Heart right ventricle (tissue), 16 donors: ENCODE measurements at regions of chr2 and their contacts with region 1.

Region 1: GRCh38 chr2:218269899-218270720 is at the starts of genes AAMP and PNKD:
- DNase-seq: peak; percentile 100
- ATAC-seq: peak; percentile 92 to 96 (median 95)
- H3K4me3 ChIP-seq: peak within 1 kb of the TSS; percentile 72 to 97 (median 90)
- H3K27ac ChIP-seq: peak within 1 kb of the TSS; percentile 62 to 93 (median 88)
- H3K4me1 ChIP-seq: peaks cover 17 to 64% (median 47%) of the 10 kb centered on the region in 9 donors
- H3K27me3 ChIP-seq: no peaks in the 10 kb centered on the region
- CTCF ChIP-seq: peak in 7 of 9 donors; percentile 4 to 54 (median 44)
- total RNA-seq, gene AAMP: 45.9 to 65.1 (median 57.5) TPM
- total RNA-seq, gene PNKD: 56.9 to 91.1 (median 74.2) TPM

Region 2: DNA sequence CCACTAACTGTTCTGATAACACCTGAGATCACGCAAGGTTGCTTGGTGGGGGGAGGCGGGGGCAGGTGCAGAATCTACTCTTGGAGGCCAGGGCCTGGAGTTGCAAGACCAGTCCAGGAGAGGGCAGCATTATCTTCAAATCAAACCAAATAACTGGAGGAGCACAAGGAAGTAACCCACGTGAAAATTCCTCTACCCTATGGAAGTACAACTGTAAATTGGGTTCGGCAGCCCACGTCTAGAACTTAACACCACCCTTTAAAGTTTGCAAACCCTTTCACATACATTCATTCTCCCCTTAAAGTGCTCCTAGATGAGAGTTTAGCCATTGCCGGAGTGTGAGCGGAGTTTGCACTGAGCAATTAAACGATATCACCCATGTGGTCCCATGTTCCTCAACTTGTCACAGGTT is 83.7 kb before region 1 on chr2:
- intact Hi-C with region 1: loop called in 2 of 10 experiments (anchors 5 kb)
- DNase-seq: peak; percentile 30 to 69
- ATAC-seq: peak; percentile 74 to 94 (median 90)
- H3K4me3 ChIP-seq: no peak overlapping the region
- H3K27ac ChIP-seq: no peak overlapping the region
- H3K4me1 ChIP-seq: peaks cover 0 to 10% (median 8%) of the 10 kb centered on the region in 9 donors
- H3K27me3 ChIP-seq: no peaks in the 10 kb centered on the region
- CTCF ChIP-seq: peak; percentile 56 to 90 (median 83)

Region 3: GRCh38 chr2:218206306-218206705 is 63.8 kb before region 1 on chr2:
- intact Hi-C with region 1: no loop called
- DNase-seq: no peak
- ATAC-seq: no peak
- H3K4me3 ChIP-seq: no peak overlapping the region
- H3K27ac ChIP-seq: no peak overlapping the region
- H3K4me1 ChIP-seq: no peaks in the 10 kb centered on the region
- H3K27me3 ChIP-seq: no peaks in the 10 kb centered on the region
- CTCF ChIP-seq: no peak

Region 4: GRCh38 chr2:218286570-218287459 is 16.7 kb after region 1 on chr2:
- intact Hi-C with region 1: loop called in 3 of 10 experiments (anchors 1 to 2 kb)
- DNase-seq: peak; percentile 84 to 96
- ATAC-seq: peak; percentile 83 to 92 (median 86)
- H3K4me3 ChIP-seq: peak overlapping the region; percentile 4 to 65 (median 49)
- H3K27ac ChIP-seq: peak overlapping the region; percentile 92 to 100 (median 98)
- H3K4me1 ChIP-seq: peaks cover 56 to 99% (median 97%) of the 10 kb centered on the region in 9 donors
- H3K27me3 ChIP-seq: no peaks in the 10 kb centered on the region
- CTCF ChIP-seq: no peak

Region 5: DNA sequence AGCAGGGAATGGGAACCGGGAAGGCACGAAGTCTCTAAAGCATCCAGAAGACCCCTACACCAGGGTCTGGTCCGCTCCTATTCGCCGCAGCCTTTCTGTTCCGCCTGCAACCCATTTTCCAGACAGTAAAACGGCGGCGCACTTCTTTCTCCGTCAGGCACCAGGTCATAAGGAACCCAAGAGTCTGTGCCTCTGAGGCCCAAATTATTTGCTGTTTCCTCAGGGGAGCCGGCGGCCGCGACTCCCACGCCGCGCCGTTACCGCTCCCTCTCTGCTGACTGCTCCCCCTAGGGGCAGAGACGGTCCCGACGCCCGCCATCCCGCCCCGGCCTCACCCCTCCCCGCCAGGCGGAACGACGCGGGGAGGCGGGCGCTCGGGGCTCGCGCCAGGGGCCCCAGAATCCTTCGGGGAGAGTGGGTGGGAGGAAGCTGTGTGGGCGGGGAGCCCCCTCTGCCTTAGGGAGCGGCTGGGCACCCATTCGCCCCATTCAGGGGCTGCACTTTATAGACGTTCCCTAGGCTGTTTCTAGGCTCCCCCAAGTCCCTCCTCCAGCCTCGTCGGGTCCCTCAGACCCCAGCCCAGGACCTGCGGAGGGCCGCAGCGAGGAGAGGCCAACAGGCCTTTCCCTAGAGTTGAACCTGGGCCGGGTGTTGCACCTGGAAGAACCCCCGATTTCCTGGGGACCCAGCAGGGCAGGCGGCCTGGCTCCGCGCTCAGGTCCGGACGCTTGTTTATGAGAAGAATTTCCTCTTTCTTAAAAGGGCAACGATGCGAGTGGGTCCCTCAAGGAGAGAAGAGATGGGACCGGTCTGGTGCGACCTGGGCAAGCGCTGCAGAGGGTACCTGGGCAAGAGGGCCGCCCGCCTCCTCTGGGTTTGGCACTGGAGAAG is 125.9 kb after region 1 on chr2:
- intact Hi-C with region 1: loop called in 6 of 10 experiments (anchors 5 kb)
- DNase-seq: peak; percentile 95
- ATAC-seq: peak; percentile 67 to 83 (median 76)
- H3K4me3 ChIP-seq: peak overlapping the region; percentile 45 to 100 (median 98)
- H3K27ac ChIP-seq: peak overlapping the region; percentile 98 to 100 (median 100)
- H3K4me1 ChIP-seq: peaks cover under 1 to 51% (median 28%) of the 10 kb centered on the region in 9 donors
- H3K27me3 ChIP-seq: no peaks in the 10 kb centered on the region
- CTCF ChIP-seq: peak; percentile 83 to 99 (median 95)

Region 6: DNA sequence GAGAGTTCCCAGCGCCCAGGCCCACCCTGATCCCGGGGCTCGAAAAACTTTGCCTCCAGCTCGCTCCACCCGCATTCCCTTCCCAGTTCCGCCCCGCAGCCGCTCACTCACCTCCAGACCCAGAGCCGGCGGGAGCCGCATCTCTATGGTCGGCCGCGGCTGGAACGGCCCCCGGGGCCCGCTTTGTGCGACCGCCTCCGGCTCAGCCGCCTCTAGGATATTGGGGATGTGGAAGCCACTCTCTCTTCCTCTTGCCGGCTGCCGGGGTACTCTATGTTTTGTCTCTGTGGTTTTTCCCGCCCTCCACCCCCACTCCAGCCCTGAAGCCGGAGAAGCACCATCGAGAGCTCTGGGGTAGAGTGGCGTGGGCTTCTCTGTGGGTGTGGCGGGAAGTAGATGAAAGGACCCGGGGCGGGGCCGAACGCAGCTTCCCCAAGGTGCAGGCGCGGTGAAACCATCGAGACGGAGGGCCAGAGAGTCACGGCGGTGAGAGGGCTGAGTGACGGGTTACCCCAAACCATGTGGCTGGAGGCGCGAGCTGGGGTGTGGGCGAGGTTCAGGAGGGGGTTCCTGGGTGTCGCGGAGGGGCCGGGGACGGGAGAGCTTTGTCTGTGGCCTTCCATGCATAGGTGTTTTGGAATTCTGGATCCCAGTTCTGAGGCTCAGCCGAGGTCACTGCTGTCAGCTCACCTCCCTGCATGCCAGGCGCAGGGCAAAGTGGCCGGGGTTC is 389.3 kb after region 1 on chr2 and contains the starts of genes BCS1L and ZNF142:
- intact Hi-C with region 1: loop called in 1 of 10 experiments (anchors 10 kb)
- DNase-seq: peak; percentile 92 to 96
- ATAC-seq: peak; percentile 91 to 98 (median 97)
- H3K4me3 ChIP-seq: peak within 1 kb of the TSS; percentile 79 to 97 (median 92)
- H3K27ac ChIP-seq: peak within 1 kb of the TSS; percentile 54 to 88 (median 81)
- H3K4me1 ChIP-seq: peaks cover 9 to 43% (median 32%) of the 10 kb centered on the region in 9 donors
- H3K27me3 ChIP-seq: no peaks in the 10 kb centered on the region
- CTCF ChIP-seq: no peak
- total RNA-seq, gene BCS1L: 34.8 to 53.8 (median 44.6) TPM
- total RNA-seq, gene ZNF142: 17.9 to 29.5 (median 22.9) TPM